ENCODE measurements at regions of chr1 and their contacts with region 1.

Region 1: GRCh38 chr1:165158780-165159179 is 197.7 kb downstream of the LMX1A start:
- DNase-seq: no peak
- ATAC-seq: no peak
- H3K4me3 ChIP-seq: no peak overlapping the region
- H3K27ac ChIP-seq: no peak overlapping the region
- H3K4me1 ChIP-seq: peaks cover 0 to 10% of the 10 kb centered on the region in 2 donors
- H3K27me3 ChIP-seq: peaks cover 0 to 9% (median 0%) of the 10 kb centered on the region in 3 donors
- CTCF ChIP-seq: no peak
- POLR2A ChIP-seq: no peak

Region 2: GRCh38 chr1:165235777-165236291 is 77.1 kb after region 1 on chr1:
- in situ Hi-C with region 1: no loop called
- intact Hi-C with region 1: loop called (anchors 5 kb)
- DNase-seq: no peak
- ATAC-seq: peak in 1 of 2 donors; percentile 21
- H3K4me3 ChIP-seq: peak overlapping the region; percentile 54 to 58 (median 56)
- H3K27ac ChIP-seq: no peak overlapping the region
- H3K4me1 ChIP-seq: peaks cover 17 to 27% of the 10 kb centered on the region in 2 donors
- H3K27me3 ChIP-seq: peaks cover 0 to 17% (median 6%) of the 10 kb centered on the region in 3 donors
- CTCF ChIP-seq: no peak
- POLR2A ChIP-seq: no peak

Region 3: GRCh38 chr1:165954940-165955339 is 796.2 kb after region 1 on chr1:
- in situ Hi-C with region 1: no loop called
- intact Hi-C with region 1: no loop called
- DNase-seq: no peak
- ATAC-seq: no peak
- H3K4me3 ChIP-seq: no peak overlapping the region
- H3K27ac ChIP-seq: no peak overlapping the region
- H3K4me1 ChIP-seq: no peaks in the 10 kb centered on the region
- H3K27me3 ChIP-seq: no peaks in the 10 kb centered on the region
- CTCF ChIP-seq: no peak
- POLR2A ChIP-seq: no peak